ENCODE measurements at regions of chr22 and their contacts with region 1.

Region 1: DNA sequence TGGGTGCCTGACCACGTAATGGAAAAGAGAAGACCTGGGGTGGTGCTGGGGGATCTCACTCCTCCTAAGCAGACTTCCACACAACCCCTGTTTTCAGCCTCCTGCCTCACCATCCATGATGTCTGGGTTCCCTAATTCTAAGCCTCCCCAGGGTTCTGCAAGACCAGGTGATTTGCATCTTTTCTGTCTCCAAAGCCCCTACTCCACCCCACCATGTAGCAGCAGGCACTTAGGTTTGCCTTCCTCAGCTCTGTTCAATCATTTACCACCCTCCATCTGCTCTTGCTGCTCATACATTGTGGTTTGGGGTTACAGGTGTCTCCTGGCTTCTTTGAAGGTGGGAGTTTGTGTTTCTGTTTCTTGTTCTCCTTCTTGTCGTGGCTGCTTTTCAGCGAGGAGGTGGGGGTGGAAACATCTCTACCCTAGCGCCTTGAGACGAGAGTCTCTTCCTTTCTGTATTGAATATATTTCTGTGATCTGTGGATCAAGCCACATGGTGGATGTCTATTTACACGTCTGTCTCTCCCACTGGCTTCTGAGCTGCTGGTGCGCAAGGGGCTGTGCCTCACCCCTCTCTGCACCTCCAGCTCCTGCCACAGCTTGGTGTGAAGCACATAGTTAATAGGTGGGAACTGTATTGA is 6.6 kb upstream of the SSTR3 start:
- DNase-seq: peak; percentile 86 to 96 (median 91)
- H3K4me3 ChIP-seq: peak overlapping the region; percentile 15 to 51
- H3K4me3 Mint-ChIP-seq: peak overlapping the region; percentile 67 to 90 (median 84)
- H3K27ac ChIP-seq: peak overlapping the region; percentile 58
- H3K27ac Mint-ChIP-seq: peak overlapping the region; percentile 87 to 98 (median 95)
- H3K4me1 ChIP-seq: peaks cover 73% of the 10 kb centered on the region
- H3K4me1 Mint-ChIP-seq: peaks cover 58 to 79% (median 64%) of the 10 kb centered on the region in 4 donors
- H3K27me3 ChIP-seq: no peaks in the 10 kb centered on the region
- H3K27me3 Mint-ChIP-seq: no peaks in the 10 kb centered on the region

Region 2: DNA sequence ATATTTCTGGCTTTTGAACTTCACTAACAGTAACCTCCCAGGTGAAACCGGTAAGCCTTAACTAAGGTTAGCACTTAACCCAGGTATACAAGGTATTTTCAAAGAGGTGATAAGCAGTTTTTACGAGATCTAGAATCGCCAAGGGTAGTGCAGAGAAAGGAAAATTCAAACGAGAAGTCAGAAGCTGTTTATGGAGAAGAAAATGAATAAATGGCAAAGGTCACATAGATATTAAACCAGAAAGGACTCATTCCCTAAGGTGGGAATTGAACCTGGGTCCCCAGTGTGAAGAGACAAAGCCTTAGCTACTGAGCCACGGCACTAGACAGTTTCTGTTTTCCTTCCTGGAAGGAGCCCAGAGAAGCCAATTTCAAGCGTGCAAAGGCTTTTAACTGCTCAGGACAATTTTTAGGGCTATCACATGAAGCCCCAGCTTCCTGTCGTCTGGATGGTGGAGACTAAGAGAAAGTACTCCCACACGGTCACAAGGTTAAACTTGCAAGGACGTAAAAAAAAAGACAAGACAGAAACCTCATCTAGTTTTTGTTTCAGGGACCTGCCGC is 25.2 kb before region 1 on chr22:
- CTCF ChIA-PET with region 1: interaction called, 39 read pairs
- POLR2A ChIA-PET with region 1: interaction called, 125 read pairs
- intact Hi-C with region 1: no loop called
- DNase-seq: peak; percentile 41 to 63 (median 45)
- H3K4me3 ChIP-seq: no peak overlapping the region
- H3K4me3 Mint-ChIP-seq: peak overlapping the region; percentile 49 to 82 (median 60)
- H3K27ac ChIP-seq: peak overlapping the region; percentile 17
- H3K27ac Mint-ChIP-seq: peak overlapping the region; percentile 68 to 95 (median 90)
- H3K4me1 ChIP-seq: peaks cover 51% of the 10 kb centered on the region
- H3K4me1 Mint-ChIP-seq: peaks cover 18 to 55% (median 33%) of the 10 kb centered on the region in 4 donors
- H3K27me3 ChIP-seq: no peaks in the 10 kb centered on the region
- H3K27me3 Mint-ChIP-seq: no peaks in the 10 kb centered on the region

Region 3: GRCh38 chr22:37229805-37230672 is 11.1 kb after region 1 on chr22:
- CTCF ChIA-PET with region 1: interaction called, 24 read pairs
- POLR2A ChIA-PET with region 1: interaction called, 646 read pairs
- intact Hi-C with region 1: loop called (anchors 1 kb)
- DNase-seq: peak; percentile 87 to 97 (median 88)
- H3K4me3 ChIP-seq: peak overlapping the region; percentile 48 to 51
- H3K4me3 Mint-ChIP-seq: peak overlapping the region; percentile 75 to 88 (median 82)
- H3K27ac ChIP-seq: peak overlapping the region; percentile 97
- H3K27ac Mint-ChIP-seq: peak overlapping the region; percentile 87 to 100 (median 100)
- H3K4me1 ChIP-seq: peaks cover 96% of the 10 kb centered on the region
- H3K4me1 Mint-ChIP-seq: peaks cover 67 to 92% (median 83%) of the 10 kb centered on the region in 4 donors
- H3K27me3 ChIP-seq: no peaks in the 10 kb centered on the region
- H3K27me3 Mint-ChIP-seq: no peaks in the 10 kb centered on the region

Region 4: DNA sequence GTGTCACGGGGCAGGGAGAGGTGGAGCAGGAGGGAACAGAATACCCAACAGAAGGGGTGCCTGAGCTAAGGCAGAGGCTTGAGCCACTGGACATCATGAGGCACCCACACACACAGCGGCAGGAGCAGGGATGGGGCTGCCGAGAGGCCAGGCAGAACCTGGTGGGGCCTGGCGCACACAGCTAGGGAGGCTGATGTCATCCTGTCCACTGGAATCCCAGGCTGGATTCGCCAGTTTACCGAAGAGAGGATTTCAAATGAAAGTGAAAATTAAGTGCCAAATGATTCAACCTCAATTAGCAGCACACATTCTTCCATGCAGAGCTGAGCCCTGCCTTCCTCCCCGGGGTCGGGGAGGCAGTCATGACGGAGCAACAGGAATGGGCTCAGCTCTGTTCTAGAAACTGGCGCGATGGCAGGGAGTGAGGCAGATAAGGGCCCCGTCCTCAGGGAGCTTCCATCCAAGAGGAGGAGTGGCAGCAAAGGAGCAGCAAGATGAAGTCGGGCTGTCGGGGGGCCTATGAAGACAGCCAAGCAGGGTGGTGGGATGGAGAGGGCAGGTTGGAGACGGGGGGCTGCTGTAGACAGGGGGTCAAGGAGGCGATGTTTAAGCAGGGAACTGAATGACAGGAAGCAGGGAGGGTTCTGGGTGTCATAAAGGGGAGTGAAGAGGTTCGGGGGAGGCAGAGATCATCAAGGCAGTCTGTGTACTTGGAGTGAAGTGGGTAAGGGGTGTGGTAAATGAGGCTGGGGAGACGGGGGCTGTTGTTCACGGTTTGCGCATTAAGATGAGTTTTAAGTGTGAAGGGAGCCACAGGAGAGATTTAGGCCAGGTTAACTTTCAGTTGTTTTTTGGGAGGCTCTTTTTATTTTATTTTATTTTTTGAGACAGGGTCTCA is 18.7 kb after region 1 on chr22:
- CTCF ChIA-PET with region 1: interaction called, 42 read pairs
- POLR2A ChIA-PET with region 1: interaction called, 646 read pairs
- intact Hi-C with region 1: loop called (anchors 1 kb)
- DNase-seq: no peak
- H3K4me3 ChIP-seq: peak overlapping the region; percentile 4 to 8
- H3K4me3 Mint-ChIP-seq: peak overlapping the region; percentile 80 to 96 (median 88)
- H3K27ac ChIP-seq: peak overlapping the region; percentile 91
- H3K27ac Mint-ChIP-seq: peak overlapping the region; percentile 87 to 98 (median 97)
- H3K4me1 ChIP-seq: peaks cover 96% of the 10 kb centered on the region
- H3K4me1 Mint-ChIP-seq: peaks cover 68 to 100% (median 88%) of the 10 kb centered on the region in 4 donors
- H3K27me3 ChIP-seq: no peaks in the 10 kb centered on the region
- H3K27me3 Mint-ChIP-seq: no peaks in the 10 kb centered on the region

Region 5: GRCh38 chr22:37370306-37370979 is 151.6 kb after region 1 on chr22:
- CTCF ChIA-PET with region 1: no interaction called
- POLR2A ChIA-PET with region 1: no interaction called
- intact Hi-C with region 1: no loop called
- DNase-seq: no peak
- H3K4me3 ChIP-seq: no peak overlapping the region
- H3K4me3 Mint-ChIP-seq: no peak overlapping the region
- H3K27ac ChIP-seq: no peak overlapping the region
- H3K27ac Mint-ChIP-seq: no peak overlapping the region
- H3K4me1 ChIP-seq: no peaks in the 10 kb centered on the region
- H3K4me1 Mint-ChIP-seq: no peaks in the 10 kb centered on the region
- H3K27me3 ChIP-seq: no peaks in the 10 kb centered on the region
- H3K27me3 Mint-ChIP-seq: peaks cover 0 to 2% of the 10 kb centered on the region in 2 donors

Measured in CD4-positive, alpha-beta memory T cell (primary cell).